Mammary epithelial cell (primary cell): ENCODE measurements at regions of chr5 and their contacts with region 1.

Region 1: GRCh38 chr5:39074016-39074886 is at the start of gene RICTOR:
- DNase-seq: peak; percentile 91
- H3K4me3 ChIP-seq: peak within 1 kb of the TSS; percentile 63 to 100 (median 92)
- H3K27ac ChIP-seq: peak within 1 kb of the TSS; percentile 95
- H3K4me1 ChIP-seq: peaks cover 18% of the 10 kb centered on the region
- H3K27me3 ChIP-seq: no peaks in the 10 kb centered on the region
- CTCF ChIP-seq: no peak
- total RNA-seq, gene RICTOR: 28.6 to 34.8 TPM

Region 2: DNA sequence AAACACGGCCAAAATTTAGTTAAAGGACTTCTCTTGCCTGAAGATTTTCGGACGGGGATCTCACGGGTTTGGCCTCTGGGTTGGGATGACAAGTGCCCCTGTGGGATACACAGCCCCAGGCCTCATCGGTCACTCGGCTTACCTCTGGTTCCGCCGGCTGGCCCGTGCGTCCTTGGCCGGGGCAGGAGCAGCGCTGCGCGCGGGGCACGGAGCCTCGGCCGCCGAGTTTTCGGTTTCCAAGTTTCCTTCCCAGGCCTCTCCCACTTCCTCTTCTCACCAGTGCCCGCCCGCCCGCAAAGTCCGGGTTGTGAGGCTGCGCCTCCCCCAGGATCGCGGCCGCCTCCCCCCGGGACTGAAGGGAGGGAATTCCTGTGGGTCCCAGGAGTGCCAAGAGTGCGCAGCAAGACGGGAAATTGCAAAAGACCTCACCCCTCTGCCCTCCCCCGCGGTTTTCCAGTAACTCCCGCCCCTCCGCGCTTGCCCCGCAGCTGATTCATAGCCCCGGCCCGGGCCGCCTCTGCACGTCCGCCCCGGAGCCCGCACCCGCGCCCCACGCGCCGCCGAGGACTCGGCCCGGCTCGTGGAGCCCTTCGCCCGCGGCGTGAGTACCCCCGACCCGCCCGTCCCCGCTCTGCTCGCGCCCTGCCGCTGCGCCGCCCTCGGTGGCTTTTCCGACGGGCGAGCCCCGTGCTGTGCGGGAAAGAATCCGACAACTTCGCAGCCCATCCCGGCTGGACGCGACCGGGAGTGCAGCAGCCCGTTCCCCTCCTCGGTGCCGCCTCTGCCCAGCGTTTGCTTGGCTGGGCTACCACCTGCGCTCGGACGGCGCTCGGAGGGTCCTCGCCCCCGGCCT is 228.5 kb before region 1 on chr5 and contains the start of gene OSMR:
- CTCF ChIA-PET with region 1: no interaction called
- dilution Hi-C with region 1: no loop called
- in situ Hi-C with region 1: no loop called
- intact Hi-C with region 1: loop called (anchors 10 kb)
- DNase-seq: peak; percentile 98
- H3K4me3 ChIP-seq: peak within 1 kb of the TSS; percentile 96 to 98 (median 97)
- H3K27ac ChIP-seq: peak within 1 kb of the TSS; percentile 100
- H3K4me1 ChIP-seq: peaks cover 17% of the 10 kb centered on the region
- H3K27me3 ChIP-seq: no peaks in the 10 kb centered on the region
- CTCF ChIP-seq: no peak
- total RNA-seq, gene OSMR: 97.7 to 111 TPM

Region 3: GRCh38 chr5:39005566-39006232 is 68.6 kb before region 1 on chr5:
- CTCF ChIA-PET with region 1: interaction called, 3 read pairs
- dilution Hi-C with region 1: no loop called
- in situ Hi-C with region 1: no loop called
- intact Hi-C with region 1: loop called (anchors 5 kb)
- DNase-seq: peak; percentile 5
- H3K4me3 ChIP-seq: no peak overlapping the region
- H3K27ac ChIP-seq: no peak overlapping the region
- H3K4me1 ChIP-seq: no peaks in the 10 kb centered on the region
- H3K27me3 ChIP-seq: no peaks in the 10 kb centered on the region
- CTCF ChIP-seq: peak; percentile 21 to 49

Region 4: DNA sequence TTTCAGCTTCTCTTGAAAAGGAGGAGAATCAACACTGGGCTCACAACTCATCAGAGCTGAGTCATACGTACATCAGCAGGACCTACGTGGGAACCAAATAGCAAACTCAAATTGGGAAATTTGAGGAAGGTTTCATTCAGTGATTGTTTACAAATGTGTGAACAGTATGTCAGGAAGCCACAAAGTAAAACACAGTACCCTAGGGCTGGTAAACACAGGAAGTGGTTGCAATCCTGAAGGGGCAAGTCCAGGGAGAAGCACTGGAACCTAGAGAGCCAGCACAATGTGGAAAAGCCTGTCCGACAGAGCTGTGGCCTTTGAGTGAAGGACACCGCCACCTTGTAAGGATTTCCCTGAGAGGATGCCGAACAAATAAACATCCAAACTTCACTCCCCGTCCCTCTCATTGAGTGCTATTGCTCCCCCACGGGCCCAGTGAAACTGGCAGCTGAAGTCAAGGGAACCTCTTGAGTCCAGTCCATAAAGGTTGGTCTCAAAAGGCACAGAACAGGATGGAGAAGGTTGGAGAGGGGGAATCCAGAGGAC is 26.7 kb after region 1 on chr5:
- CTCF ChIA-PET with region 1: no interaction called
- dilution Hi-C with region 1: no loop called
- in situ Hi-C with region 1: no loop called
- intact Hi-C with region 1: loop called (anchors 1 kb)
- DNase-seq: peak; percentile 99
- H3K4me3 ChIP-seq: no peak overlapping the region
- H3K27ac ChIP-seq: peak overlapping the region; percentile 94
- H3K4me1 ChIP-seq: peaks cover 47% of the 10 kb centered on the region
- H3K27me3 ChIP-seq: no peaks in the 10 kb centered on the region
- CTCF ChIP-seq: no peak

Region 5: GRCh38 chr5:39194466-39195136 is 120.3 kb after region 1 on chr5:
- CTCF ChIA-PET with region 1: no interaction called
- dilution Hi-C with region 1: no loop called
- in situ Hi-C with region 1: no loop called
- intact Hi-C with region 1: loop called (anchors 10 kb)
- DNase-seq: peak; percentile 96
- H3K4me3 ChIP-seq: no peak overlapping the region
- H3K27ac ChIP-seq: peak overlapping the region; percentile 96
- H3K4me1 ChIP-seq: peaks cover 52% of the 10 kb centered on the region
- H3K27me3 ChIP-seq: no peaks in the 10 kb centered on the region
- CTCF ChIP-seq: no peak